GM10248 (cell line): ENCODE measurements at regions of chr1 and their contacts with region 1.

Region 1: DNA sequence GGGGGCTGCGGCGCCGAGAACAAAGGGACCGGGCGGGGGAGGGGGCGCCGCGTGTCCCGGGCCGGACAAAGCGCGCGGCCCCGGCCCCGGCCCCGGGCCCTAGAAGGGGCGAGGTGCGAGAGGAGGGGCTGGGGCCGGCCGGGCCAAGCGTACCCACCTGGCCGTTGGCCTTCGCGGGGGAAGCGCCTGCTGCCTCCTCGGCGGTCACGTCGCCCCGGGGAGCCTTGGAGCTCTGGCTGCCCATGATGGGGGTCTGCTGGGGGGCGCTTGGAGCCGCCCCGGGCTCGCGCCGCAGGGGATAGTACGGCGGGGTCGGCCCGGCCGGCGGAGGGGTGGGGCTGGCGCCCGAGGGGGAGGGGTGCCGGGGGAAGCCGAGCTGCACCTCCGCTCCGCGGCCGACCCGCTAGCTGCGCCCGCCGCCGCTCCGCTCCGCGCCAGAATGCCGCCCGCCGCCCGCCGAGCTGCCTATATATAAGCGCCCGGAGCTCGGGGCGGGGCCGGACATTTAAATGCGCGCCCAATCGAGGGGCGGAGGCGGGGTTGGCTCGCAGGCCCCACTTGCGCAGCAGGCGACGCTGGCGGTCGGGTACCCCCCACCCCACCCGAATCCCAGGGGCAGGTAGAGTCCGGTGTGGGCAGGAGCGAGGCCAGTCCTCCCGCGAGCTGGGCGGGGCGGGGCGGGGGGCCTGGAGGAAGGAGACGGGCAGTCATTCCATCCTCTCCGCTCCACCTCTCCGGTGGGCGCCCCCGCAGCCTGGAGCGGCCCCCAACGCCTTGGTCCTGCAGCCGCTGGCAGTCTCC is at the start of gene MARCKSL1:
- DNase-seq: peak; percentile 86
- CTCF ChIP-seq: no peak

Region 2: DNA sequence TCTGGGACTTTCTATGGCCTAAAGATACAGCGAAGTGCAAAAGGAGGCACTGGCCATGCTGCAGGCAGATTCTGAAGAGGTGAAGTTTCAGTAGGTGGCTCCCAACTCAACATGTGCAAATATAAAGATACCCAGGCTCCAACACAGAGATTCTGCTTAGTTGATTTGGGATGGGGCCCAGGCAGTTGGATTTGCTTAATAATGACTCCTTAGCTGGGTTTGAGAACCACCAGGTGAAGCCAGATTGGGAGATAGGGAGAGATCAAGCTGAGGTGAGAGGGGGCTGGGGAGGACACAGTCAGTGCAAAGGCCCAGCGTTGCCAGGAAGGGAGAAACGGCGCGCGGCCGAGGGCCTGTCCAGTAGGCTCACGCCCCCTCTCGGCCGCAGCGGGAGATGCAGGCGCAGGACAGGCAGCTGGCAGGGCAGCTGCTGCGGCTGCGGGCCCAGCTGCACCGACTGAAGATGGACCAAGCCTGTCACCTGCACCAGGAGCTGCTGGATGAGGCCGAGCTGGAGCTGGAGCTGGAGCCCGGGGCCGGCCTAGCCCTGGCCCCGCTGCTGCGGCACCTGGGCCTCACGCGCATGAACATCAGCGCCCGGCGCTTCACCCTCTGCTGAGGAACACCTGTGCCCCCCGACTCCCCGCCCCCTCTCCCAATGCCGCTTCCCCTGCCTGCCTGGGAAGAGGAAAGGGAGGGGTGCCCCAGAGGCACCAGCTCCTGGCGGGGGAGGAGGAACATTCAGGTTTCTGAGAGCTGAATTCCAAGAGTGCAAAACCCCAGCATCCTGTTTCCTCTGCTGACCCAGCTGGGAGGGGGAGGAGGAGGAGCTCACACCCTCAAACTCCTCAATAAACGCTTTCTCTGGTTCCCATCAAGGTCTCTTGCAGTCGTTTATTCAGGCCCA is 87.8 kb before region 1 on chr1:
- CTCF ChIA-PET with region 1: interaction called, 6 read pairs
- POLR2A ChIA-PET with region 1: interaction called, 27 read pairs
- DNase-seq: peak; percentile 87
- CTCF ChIP-seq: peak; percentile 94

Region 3: DNA sequence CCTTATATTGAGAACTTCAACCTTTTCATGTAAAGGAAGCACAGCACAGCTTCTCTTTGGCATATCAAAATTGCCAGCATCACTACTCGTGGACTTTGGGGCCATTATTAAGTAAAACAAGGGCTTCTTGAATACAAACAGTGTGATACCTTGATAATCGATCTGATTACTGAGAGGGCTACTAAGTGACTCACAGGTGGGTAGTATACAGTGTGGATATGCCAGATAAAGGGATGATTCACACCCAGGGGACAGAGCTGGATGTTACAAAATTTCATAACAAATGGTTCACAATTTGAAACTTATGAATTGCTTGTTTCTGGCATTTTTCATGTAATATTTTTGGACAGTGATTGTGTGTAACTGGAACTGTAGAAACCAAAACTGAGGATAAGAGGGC is 28.7 kb before region 1 on chr1:
- CTCF ChIA-PET with region 1: interaction called, 3 read pairs
- POLR2A ChIA-PET with region 1: interaction called, 10 read pairs
- DNase-seq: no peak
- CTCF ChIP-seq: no peak

Region 4: DNA sequence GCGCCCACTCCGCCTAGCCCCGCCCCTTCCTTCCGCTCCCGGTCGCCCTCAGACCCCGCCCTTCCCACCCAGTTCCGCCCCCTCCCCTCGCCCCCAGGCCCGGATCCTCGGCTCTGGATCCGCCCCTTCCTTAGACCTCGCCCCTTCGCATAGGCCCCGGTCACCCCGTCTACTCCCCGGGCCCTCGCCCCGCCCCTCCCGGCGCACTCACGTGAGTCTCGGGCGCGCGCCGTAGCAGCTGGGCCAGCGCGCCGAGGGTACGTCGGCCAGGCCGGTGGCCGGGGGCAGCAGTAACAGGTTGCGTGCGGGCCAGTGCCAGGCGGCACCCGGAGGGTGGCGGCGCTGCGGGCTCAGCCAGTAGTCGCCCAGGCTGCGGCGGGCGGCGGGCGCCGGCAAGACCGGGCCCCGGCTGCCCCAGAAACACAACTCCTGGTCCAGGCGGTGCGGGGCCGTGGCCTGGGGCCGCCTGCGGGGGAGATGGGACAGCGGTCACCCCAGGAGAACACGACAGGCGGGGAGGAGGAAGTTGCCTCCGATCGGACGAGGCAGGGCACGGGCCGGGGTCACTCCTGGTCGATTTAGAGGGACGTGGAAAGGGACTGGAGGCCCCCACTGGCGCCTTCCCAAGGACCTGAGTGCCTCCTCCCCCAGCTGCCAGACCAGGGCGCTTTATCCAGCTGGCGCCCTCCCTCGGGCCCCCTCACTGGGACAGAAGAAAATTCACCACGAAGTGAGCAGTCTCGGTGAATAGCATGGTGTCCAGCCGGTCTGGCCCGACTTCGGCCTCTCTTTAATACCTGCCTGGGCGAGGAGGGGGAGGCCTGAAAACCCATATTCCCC is 15.6 kb after region 1 on chr1:
- CTCF ChIA-PET with region 1: interaction called, 11 read pairs
- POLR2A ChIA-PET with region 1: interaction called, 62 read pairs
- DNase-seq: peak; percentile 99
- CTCF ChIP-seq: no peak

Region 5: GRCh38 chr1:32372149-32372756 is 36.3 kb after region 1 on chr1:
- CTCF ChIA-PET with region 1: no interaction called
- POLR2A ChIA-PET with region 1: interaction called, 10 read pairs
- DNase-seq: peak; percentile 42
- CTCF ChIP-seq: peak; percentile 17

Region 6: DNA sequence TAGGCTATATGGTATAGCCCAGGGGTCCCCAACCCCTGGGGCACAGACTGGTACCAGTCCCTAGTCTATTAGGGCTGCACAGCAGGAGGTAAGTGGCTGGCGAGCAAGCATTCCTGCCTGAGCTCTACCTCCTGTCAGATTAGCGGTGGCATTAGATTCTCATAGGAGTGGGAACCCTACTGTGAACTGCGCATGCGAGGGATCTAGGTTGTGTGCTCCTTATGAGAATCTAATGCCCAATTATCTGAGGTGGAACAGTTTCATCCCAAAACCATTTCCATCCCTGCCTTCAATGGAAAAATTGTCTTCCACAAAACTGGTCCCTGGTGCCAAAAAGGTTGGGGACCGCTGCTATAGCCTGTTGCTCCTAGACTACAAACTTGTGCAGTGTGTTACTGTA is 180.4 kb after region 1 on chr1:
- CTCF ChIA-PET with region 1: no interaction called
- POLR2A ChIA-PET with region 1: no interaction called
- DNase-seq: no peak
- CTCF ChIP-seq: no peak